ENCODE measurements at regions of chr7 and their contacts with region 1.

Region 1: GRCh38 chr7:74401137-74401859 is 52.4 kb upstream of the GTF2IRD1 start:
- DNase-seq: peak in 5 of 6 donors; percentile 52 to 88 (median 76)
- ATAC-seq: peak; percentile 72 to 89 (median 84)
- H3K4me3 ChIP-seq: no peak overlapping the region
- H3K27ac ChIP-seq: no peak overlapping the region
- H3K4me1 ChIP-seq: no peaks in the 10 kb centered on the region
- H3K27me3 ChIP-seq: no peaks in the 10 kb centered on the region
- CTCF ChIP-seq: peak; percentile 94 to 96 (median 96)

Region 2: GRCh38 chr7:73865738-73866445 is 535.4 kb before region 1 on chr7:
- intact Hi-C with region 1: loop called in 1 of 3 experiments (anchors 10 kb)
- DNase-seq: peak in 1 of 6 donors; percentile 53
- ATAC-seq: peak in 3 of 4 donors; percentile 80 to 89 (median 87)
- H3K4me3 ChIP-seq: no peak overlapping the region
- H3K27ac ChIP-seq: no peak overlapping the region
- H3K4me1 ChIP-seq: no peaks in the 10 kb centered on the region
- H3K27me3 ChIP-seq: no peaks in the 10 kb centered on the region
- CTCF ChIP-seq: peak; percentile 7 to 47 (median 32)

Region 3: GRCh38 chr7:74068393-74069085 is 332.8 kb before region 1 on chr7:
- intact Hi-C with region 1: loop called in 1 of 3 experiments (anchors 1 kb)
- DNase-seq: peak in 1 of 6 donors; percentile 78
- ATAC-seq: no peak
- H3K4me3 ChIP-seq: no peak overlapping the region
- H3K27ac ChIP-seq: no peak overlapping the region
- H3K4me1 ChIP-seq: no peaks in the 10 kb centered on the region
- H3K27me3 ChIP-seq: no peaks in the 10 kb centered on the region
- CTCF ChIP-seq: no peak

Region 4: GRCh38 chr7:74206589-74207120 is 194.6 kb before region 1 on chr7:
- intact Hi-C with region 1: loop called (anchors 5 to 10 kb)
- DNase-seq: peak; percentile 74 to 99 (median 90)
- ATAC-seq: peak; percentile 91 to 95 (median 92)
- H3K4me3 ChIP-seq: no peak overlapping the region
- H3K27ac ChIP-seq: no peak overlapping the region
- H3K4me1 ChIP-seq: no peaks in the 10 kb centered on the region
- H3K27me3 ChIP-seq: no peaks in the 10 kb centered on the region
- CTCF ChIP-seq: peak; percentile 85 to 97 (median 96)

Region 5: GRCh38 chr7:74217455-74218342 is 183.6 kb before region 1 on chr7:
- intact Hi-C with region 1: loop called in 1 of 3 experiments (anchors 10 kb)
- DNase-seq: no peak
- ATAC-seq: peak in 2 of 4 donors; percentile 21 to 66
- H3K4me3 ChIP-seq: no peak overlapping the region
- H3K27ac ChIP-seq: no peak overlapping the region
- H3K4me1 ChIP-seq: no peaks in the 10 kb centered on the region
- H3K27me3 ChIP-seq: no peaks in the 10 kb centered on the region
- CTCF ChIP-seq: no peak